Activated CD4-positive, alpha-beta T cell treated with anti-CD3 and anti-CD28 coated beads for 36 hours (primary cell): ENCODE measurements at regions of chr6 and their contacts with region 1.

Region 1: GRCh38 chr6:46221222-46221793 is 50.5 kb upstream of the ENPP5 start:
- DNase-seq: peak; percentile 11
- ATAC-seq: peak; percentile 57
- H3K4me3 Mint-ChIP-seq: no peak overlapping the region
- H3K27ac Mint-ChIP-seq: peak overlapping the region; percentile 67
- H3K4me1 Mint-ChIP-seq: peaks cover 26% of the 10 kb centered on the region
- H3K27me3 Mint-ChIP-seq: peaks cover 8% of the 10 kb centered on the region

Region 2: DNA sequence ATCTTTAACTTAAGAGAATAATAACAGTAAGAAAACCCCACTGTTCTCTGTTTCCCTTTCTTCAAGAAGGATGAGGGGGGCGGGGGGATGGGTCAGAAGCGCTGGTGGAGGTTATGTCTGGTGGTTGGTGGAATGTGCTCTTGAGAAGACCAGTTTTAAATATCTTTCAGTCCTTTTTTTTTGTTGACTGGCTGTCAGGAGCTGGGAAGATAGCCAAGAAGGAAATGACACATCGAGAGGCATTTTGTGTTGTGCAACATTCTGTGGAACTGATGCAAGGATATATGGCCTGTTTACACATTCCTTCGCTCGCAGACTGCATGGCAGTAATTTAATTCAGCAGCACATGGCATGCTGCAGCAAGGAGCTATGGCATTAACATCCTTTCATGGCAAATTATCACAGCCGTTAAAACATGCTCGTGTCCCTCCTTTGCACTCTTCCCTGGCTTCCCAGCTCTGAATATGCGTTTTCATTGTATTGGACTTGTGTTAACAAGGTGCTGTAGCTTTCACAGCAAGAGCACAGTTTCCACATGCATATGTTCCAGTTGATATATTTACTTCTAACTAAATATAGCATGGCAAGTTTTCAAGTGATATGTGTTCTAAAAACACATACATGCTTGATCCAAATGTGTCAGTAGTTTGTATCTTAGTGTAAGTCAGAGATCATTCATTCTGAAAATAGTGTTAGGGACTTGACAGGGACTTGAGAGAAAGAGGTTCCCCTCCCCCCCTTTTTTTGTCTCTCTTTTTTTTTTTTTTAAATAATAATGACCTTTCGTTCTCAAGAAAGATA is 775.4 kb before region 1 on chr6:
- CTCF ChIA-PET with region 1: no interaction called
- POLR2A ChIA-PET with region 1: no interaction called
- intact Hi-C with region 1: no loop called
- DNase-seq: peak; percentile 63
- ATAC-seq: peak; percentile 61
- H3K4me3 Mint-ChIP-seq: peak overlapping the region; percentile 10
- H3K27ac Mint-ChIP-seq: peak overlapping the region; percentile 91
- H3K4me1 Mint-ChIP-seq: peaks cover 86% of the 10 kb centered on the region
- H3K27me3 Mint-ChIP-seq: peaks cover 1% of the 10 kb centered on the region

Region 3: GRCh38 chr6:46170357-46171289 is 50.7 kb before region 1 on chr6 and contains the start of gene ENPP5:
- CTCF ChIA-PET with region 1: no interaction called
- POLR2A ChIA-PET with region 1: no interaction called
- intact Hi-C with region 1: loop called (anchors 2 to 5 kb)
- DNase-seq: peak; percentile 84
- ATAC-seq: peak; percentile 95
- H3K4me3 Mint-ChIP-seq: peak within 1 kb of the TSS; percentile 74
- H3K27ac Mint-ChIP-seq: no peak within 1 kb of the TSS
- H3K4me1 Mint-ChIP-seq: peaks cover 15% of the 10 kb centered on the region
- H3K27me3 Mint-ChIP-seq: peaks cover 26% of the 10 kb centered on the region
- total RNA-seq, gene ENPP5: 0.16 to 0.23 TPM

Region 4: DNA sequence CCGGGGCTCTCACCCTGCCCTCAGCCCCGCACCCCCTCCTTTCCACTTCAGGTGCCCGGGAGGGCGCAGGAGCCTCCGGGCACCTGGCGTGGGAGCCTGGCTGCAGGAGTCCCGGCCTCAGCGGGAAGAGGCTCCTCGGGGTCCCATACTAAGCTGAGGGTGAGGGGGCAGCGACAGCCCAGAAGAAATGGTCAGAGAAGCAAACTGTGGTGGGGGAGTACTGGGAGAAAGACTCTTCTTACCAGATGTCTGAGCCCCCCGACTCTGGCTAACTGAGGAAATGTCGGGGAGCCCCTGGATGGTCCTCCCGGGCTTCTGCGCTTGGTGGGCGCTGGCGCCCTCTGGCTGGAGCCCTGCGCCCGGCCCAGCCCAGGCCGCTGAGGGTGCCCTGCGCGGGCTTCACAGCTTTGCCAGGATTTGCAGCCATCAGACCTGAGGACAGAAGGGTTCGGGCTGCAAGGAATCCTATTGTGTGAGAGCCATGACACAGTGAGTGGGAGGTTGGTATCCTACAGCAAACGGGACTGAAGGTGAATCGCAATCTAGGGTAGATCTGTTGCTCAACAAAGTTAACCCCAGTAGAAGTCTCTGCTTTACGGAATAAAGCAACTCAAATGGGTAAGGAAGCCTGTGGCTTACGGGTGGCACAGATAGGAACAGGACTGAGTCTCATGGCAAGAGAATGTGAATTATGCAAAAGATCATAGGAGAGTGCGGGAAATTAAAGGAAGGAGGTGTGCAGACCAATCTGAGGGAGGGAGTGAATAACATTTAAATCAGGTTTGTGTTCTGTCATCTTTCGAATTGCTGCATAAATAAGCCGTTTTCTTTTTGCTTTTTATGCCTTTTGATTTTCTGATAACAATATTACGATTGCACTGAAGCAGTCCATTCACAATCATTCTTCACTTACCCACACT is 270.6 kb after region 1 on chr6:
- CTCF ChIA-PET with region 1: no interaction called
- POLR2A ChIA-PET with region 1: no interaction called
- intact Hi-C with region 1: loop called in 1 of 2 experiments (anchors 5 kb)
- DNase-seq: peak; percentile 29
- ATAC-seq: peak; percentile 47
- H3K4me3 Mint-ChIP-seq: peak overlapping the region; percentile 10
- H3K27ac Mint-ChIP-seq: no peak overlapping the region
- H3K4me1 Mint-ChIP-seq: peaks cover 3% of the 10 kb centered on the region
- H3K27me3 Mint-ChIP-seq: peaks cover 58% of the 10 kb centered on the region

Region 5: DNA sequence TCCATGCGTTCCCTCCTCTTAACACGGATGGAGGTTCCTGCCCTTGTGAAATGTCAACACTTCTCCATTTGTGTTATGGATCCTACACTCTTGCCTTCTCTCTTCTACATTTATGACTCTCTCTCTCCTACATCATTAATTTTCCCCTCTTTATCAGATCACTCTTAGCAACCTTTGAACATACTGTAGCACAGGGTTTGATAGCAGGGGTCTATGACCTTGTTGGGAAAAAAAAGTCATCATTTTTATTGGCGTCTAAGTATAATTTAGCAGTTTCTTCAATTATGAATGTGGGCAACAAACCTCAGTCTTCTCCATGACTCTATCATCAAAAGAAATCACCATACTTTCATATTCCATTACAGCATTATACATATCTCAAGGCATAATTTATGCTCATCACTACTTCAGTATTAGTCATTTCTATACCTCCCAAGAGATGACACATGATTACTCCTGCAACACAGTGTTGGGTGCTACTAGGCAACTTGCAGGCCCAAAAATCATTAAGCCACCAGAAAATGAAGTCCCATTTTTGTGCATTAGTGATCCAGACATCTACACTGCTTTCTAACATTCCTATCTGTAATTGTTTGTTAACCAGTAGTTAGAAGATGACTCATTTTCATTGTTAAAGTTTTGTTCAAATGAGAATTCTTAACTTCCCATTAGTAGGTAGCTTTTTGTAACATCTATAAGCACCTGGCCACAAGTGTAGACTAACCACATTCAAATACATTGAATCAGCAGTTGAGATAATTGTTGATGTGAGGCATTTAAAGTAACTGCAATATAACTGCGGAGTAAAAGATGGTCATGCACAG is 421.8 kb after region 1 on chr6:
- CTCF ChIA-PET with region 1: no interaction called
- POLR2A ChIA-PET with region 1: no interaction called
- intact Hi-C with region 1: loop called in 1 of 2 experiments (anchors 5 kb)
- DNase-seq: peak; percentile 12
- ATAC-seq: peak; percentile 99
- H3K4me3 Mint-ChIP-seq: no peak overlapping the region
- H3K27ac Mint-ChIP-seq: no peak overlapping the region
- H3K4me1 Mint-ChIP-seq: peaks cover 15% of the 10 kb centered on the region
- H3K27me3 Mint-ChIP-seq: peaks cover 25% of the 10 kb centered on the region

Region 6: GRCh38 chr6:47047479-47048407 is 826.4 kb after region 1 on chr6:
- CTCF ChIA-PET with region 1: no interaction called
- POLR2A ChIA-PET with region 1: no interaction called
- intact Hi-C with region 1: loop called in 1 of 2 experiments (anchors 5 kb)
- DNase-seq: peak; percentile 42
- ATAC-seq: peak; percentile 72
- H3K4me3 Mint-ChIP-seq: no peak overlapping the region
- H3K27ac Mint-ChIP-seq: no peak overlapping the region
- H3K4me1 Mint-ChIP-seq: peaks cover 2% of the 10 kb centered on the region
- H3K27me3 Mint-ChIP-seq: peaks cover 10% of the 10 kb centered on the region